MCF 10A (cell line): ENCODE measurements at regions of chr21 and their contacts with region 1.

Region 1: GRCh38 chr21:46458315-46459023 is at the start of gene DIP2A:
- DNase-seq: peak; percentile 97
- H3K4me3 Mint-ChIP-seq: peak within 1 kb of the TSS; percentile 79
- H3K27ac Mint-ChIP-seq: peak within 1 kb of the TSS; percentile 78
- H3K4me1 Mint-ChIP-seq: peaks cover 9% of the 10 kb centered on the region
- H3K27me3 Mint-ChIP-seq: no peaks in the 10 kb centered on the region
- CTCF ChIP-seq: no peak
- total RNA-seq, gene DIP2A: 39.6 and 55.1 TPM in 2 replicates

Region 2: DNA sequence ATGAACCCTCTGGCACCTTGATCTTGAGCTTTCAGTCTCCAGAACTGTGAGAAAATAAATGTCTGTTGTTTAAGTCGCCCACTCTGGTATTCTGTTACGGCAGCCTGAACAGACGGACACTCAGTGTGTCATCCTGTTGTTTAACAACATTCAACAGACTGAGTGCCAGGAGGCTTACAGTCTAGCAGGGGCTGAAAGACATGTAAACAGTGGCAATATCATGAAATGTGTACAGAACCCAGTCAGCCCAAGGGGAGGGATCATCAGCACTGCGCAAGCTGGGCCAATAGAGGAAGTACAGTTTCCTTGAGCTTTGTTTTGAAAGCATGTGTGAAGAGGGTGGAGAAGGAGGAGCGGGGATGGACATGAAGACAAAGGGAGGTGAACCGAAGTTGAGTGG is 13.8 kb after region 1 on chr21:
- CTCF ChIA-PET with region 1: interaction called, 3 read pairs
- POLR2A ChIA-PET with region 1: interaction called, 38 read pairs
- intact Hi-C with region 1: no loop called
- DNase-seq: no peak
- H3K4me3 Mint-ChIP-seq: no peak overlapping the region
- H3K27ac Mint-ChIP-seq: no peak overlapping the region
- H3K4me1 Mint-ChIP-seq: peaks cover 11% of the 10 kb centered on the region
- H3K27me3 Mint-ChIP-seq: no peaks in the 10 kb centered on the region
- CTCF ChIP-seq: no peak

Region 3: DNA sequence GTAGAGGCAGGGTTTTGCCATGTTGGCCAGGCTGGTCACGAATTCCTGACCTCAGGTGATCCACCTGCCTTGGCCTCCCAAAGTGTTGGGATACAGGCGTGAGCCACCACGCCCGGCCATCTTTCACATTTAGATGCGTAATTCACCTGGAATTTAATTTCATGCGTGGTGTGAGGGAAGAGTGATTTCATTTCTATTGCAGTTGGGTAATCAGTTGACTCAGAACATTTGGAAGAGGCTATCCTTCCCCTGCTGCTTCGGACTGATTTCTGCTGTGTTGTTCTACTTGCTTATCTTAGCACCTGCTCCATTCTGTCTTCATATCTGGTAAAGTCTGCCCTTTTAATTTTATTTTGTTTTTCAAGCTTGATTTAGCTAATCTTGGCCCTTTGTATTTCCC is 19.3 kb after region 1 on chr21:
- CTCF ChIA-PET with region 1: no interaction called
- POLR2A ChIA-PET with region 1: interaction called, 38 read pairs
- intact Hi-C with region 1: no loop called
- DNase-seq: peak; percentile 83
- H3K4me3 Mint-ChIP-seq: no peak overlapping the region
- H3K27ac Mint-ChIP-seq: peak overlapping the region; percentile 60
- H3K4me1 Mint-ChIP-seq: peaks cover 21% of the 10 kb centered on the region
- H3K27me3 Mint-ChIP-seq: no peaks in the 10 kb centered on the region
- CTCF ChIP-seq: no peak

Region 4: DNA sequence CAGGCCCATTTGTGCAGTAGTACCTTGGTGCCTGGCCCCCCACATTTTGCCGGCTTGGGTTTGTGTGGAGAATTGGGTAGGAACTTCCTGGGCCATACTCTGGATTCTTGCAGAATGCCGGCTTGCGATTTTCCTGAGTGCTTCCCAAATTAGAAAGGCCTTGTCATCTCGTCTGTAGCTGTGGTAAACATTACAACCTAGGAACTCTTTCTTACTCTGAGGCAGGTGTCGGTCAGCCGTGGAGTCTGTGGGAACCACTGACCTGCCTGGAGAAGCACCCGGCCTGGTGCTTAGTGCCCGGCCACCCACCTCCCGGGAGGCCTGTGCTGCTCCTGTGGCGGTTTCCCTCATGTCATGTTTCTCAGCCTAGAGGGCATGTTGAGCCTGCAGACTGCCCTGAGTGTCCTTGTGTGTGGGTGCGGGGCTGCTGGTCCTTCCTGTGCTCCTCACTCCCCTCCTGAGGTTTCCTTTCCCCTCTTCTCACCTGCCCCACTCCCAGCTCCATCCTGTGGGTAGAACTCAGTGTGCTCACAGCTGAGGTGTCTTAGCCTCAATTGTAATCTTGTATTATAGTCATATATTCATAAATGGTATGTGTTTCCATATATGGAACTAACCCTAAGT is 81.7 kb after region 1 on chr21:
- CTCF ChIA-PET with region 1: no interaction called
- POLR2A ChIA-PET with region 1: no interaction called
- intact Hi-C with region 1: no loop called
- DNase-seq: no peak
- H3K4me3 Mint-ChIP-seq: no peak overlapping the region
- H3K27ac Mint-ChIP-seq: no peak overlapping the region
- H3K4me1 Mint-ChIP-seq: no peaks in the 10 kb centered on the region
- H3K27me3 Mint-ChIP-seq: no peaks in the 10 kb centered on the region
- CTCF ChIP-seq: no peak